Endothelial cell of umbilical vein (primary cell): ENCODE measurements at regions of chr2 and their contacts with region 1.

Region 1: DNA sequence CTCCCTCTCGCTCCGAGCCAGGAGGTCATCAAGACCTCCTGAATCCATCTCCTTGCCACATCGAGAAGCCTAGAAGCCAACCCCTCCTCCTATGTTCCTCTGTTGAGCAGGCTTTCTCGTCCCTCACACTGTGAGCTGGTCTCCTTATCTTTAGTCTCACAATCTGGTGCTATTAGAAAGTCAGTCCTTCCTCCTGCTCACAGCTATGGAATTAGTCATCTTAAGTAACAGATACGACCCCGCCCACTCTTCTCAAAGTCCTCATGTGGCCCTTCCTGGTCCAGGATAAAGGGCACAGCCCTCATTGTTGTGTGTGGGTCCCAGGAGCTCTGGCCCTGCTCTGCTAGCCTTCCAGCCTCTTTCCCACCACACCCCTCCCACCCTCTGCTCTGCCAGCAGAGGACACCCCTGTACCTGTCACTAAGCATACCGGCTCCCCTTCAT is 41.4 kb upstream of the TRIB2 start:
- DNase-seq: peak; percentile 69
- H3K4me3 ChIP-seq: no peak overlapping the region
- H3K27ac ChIP-seq: peak overlapping the region; percentile 81
- H3K4me1 ChIP-seq: peaks cover 33% of the 10 kb centered on the region
- H3K27me3 ChIP-seq: no peaks in the 10 kb centered on the region
- CTCF ChIP-seq: no peak
- POLR2A ChIP-seq: no peak

Region 2: DNA sequence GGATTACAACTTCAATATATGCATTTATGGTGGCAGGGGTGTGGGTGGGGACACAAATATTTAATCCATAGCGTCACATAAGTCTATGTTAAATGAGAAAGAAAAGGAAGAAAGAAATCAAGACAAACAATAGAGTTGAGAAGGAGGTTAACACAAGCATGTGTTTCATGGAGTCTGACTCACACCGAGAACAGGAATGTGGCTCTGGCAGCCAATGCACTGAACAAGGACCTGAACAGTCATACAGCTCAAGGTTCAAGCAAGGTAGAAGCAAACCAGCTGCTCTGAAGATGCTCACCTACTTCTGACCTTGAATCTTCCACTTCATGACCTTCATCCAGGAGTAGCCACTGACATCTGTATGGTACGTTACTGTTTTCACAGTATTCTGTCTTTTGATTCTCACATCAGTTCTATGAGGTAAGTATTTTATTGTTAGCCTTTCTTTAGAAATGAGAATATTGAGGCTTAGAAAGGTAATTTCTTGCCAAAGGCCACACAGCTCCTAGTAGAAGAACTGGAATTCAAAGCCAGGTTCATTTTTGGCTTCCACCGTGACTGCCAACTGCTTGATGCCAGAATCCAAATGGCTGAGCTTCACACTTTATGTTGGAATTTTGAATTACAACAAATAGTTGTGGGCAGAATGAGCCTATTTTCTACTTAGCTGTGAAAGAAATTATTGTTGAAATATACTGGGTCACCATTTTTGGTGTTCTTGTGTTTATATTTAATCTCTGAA is 965.0 kb before region 1 on chr2:
- CTCF ChIA-PET with region 1: no interaction called
- POLR2A ChIA-PET with region 1: no interaction called
- dilution Hi-C with region 1: no loop called
- intact Hi-C with region 1: no loop called
- DNase-seq: peak; percentile 78
- H3K4me3 ChIP-seq: no peak overlapping the region
- H3K27ac ChIP-seq: no peak overlapping the region
- H3K4me1 ChIP-seq: peaks cover 4% of the 10 kb centered on the region
- H3K27me3 ChIP-seq: no peaks in the 10 kb centered on the region
- CTCF ChIP-seq: no peak
- POLR2A ChIP-seq: no peak

Region 3: DNA sequence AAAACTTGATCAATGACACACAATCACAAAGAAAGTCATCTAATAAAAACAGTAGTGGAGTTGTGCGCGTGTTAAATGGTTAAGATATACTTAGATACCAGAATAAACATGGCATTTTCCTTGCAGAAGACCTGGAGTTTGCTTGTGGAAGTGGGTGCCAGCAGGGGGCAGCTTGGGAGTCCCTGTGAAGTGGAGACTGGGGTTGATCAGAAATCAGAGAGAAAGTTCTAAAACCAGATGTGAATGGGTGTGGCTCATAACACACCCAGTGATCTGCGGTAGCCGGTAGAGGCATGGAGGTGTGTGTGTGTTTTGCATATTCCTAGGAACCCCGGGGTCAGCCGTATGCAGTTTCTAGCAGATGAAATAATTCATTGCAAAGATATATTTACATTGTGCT is 258.8 kb before region 1 on chr2:
- CTCF ChIA-PET with region 1: no interaction called
- POLR2A ChIA-PET with region 1: no interaction called
- dilution Hi-C with region 1: no loop called
- intact Hi-C with region 1: no loop called
- DNase-seq: peak; percentile 57
- H3K4me3 ChIP-seq: no peak overlapping the region
- H3K27ac ChIP-seq: no peak overlapping the region
- H3K4me1 ChIP-seq: peaks cover 3% of the 10 kb centered on the region
- H3K27me3 ChIP-seq: no peaks in the 10 kb centered on the region
- CTCF ChIP-seq: peak; percentile 47 to 62
- POLR2A ChIP-seq: no peak

Region 4: DNA sequence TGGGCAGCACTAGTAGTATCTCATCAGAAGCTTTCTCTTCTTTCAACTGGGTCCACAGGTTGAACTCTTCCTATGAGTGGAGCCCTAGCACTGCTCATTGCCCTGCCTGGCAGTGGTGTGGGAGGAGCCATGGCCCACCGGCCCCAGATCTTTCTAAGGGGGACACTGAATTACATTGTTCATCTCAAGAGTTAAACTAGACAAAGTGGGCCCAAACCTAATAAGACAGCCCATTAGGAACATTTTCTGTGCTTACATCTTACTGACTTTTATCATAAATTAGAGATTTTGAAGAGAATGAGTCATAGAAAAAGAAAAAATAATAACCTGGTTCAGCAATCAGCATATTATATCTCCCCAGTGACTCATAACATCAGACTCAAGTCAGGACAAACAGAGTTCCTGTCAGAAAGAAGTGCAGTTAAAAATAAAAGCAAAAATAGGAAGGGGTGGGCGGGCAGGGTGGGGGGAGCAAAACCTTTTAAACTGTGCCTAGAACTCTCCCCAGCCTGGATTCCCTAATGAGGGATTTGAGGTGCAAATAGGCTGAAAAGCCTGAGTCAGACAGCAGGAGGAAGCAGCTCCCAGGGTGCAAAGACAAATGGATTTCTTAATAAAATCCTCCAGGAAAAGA is 120.2 kb before region 1 on chr2:
- CTCF ChIA-PET with region 1: no interaction called
- POLR2A ChIA-PET with region 1: no interaction called
- dilution Hi-C with region 1: no loop called
- intact Hi-C with region 1: loop called (anchors 5 kb)
- DNase-seq: peak; percentile 85
- H3K4me3 ChIP-seq: no peak overlapping the region
- H3K27ac ChIP-seq: no peak overlapping the region
- H3K4me1 ChIP-seq: peaks cover 23% of the 10 kb centered on the region
- H3K27me3 ChIP-seq: no peaks in the 10 kb centered on the region
- CTCF ChIP-seq: no peak
- POLR2A ChIP-seq: no peak

Region 5: GRCh38 chr2:12665334-12665733 is 10.0 kb before region 1 on chr2:
- CTCF ChIA-PET with region 1: interaction called, 9 read pairs
- POLR2A ChIA-PET with region 1: no interaction called
- dilution Hi-C with region 1: no loop called
- intact Hi-C with region 1: loop called (anchors 1 kb)
- DNase-seq: peak; percentile 94
- H3K4me3 ChIP-seq: no peak overlapping the region
- H3K27ac ChIP-seq: peak overlapping the region; percentile 86
- H3K4me1 ChIP-seq: peaks cover 24% of the 10 kb centered on the region
- H3K27me3 ChIP-seq: no peaks in the 10 kb centered on the region
- CTCF ChIP-seq: no peak
- POLR2A ChIP-seq: no peak

Region 6: GRCh38 chr2:12702305-12703121 is 27.1 kb after region 1 on chr2:
- CTCF ChIA-PET with region 1: interaction called, 3 read pairs
- POLR2A ChIA-PET with region 1: no interaction called
- dilution Hi-C with region 1: no loop called
- intact Hi-C with region 1: loop called (anchors 1 kb)
- DNase-seq: peak; percentile 93
- H3K4me3 ChIP-seq: no peak overlapping the region
- H3K27ac ChIP-seq: peak overlapping the region; percentile 32
- H3K4me1 ChIP-seq: peaks cover 12% of the 10 kb centered on the region
- H3K27me3 ChIP-seq: no peaks in the 10 kb centered on the region
- CTCF ChIP-seq: no peak
- POLR2A ChIP-seq: no peak

Region 7: DNA sequence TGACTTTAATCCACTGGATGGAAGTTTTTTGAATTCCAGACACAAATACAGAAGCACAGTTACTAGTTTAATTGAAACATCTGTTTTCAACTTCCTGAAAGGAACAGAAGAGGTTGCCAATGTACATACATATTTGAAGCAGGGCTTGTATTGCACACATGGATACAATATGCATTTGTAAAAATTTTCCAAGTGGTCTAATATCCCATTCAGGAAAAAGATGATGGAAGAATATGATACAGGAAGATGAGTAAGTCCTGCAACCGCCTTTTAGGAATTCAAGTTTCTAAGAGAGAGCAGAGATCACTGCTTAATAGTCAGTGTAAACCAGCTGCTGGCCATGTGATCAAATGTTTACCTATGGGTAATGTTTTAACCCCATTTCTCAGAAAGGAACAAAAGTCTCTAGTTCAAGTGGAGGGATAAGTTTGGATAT is 306.8 kb after region 1 on chr2:
- CTCF ChIA-PET with region 1: no interaction called
- POLR2A ChIA-PET with region 1: no interaction called
- dilution Hi-C with region 1: no loop called
- intact Hi-C with region 1: loop called (anchors 5 kb)
- DNase-seq: peak; percentile 90
- H3K4me3 ChIP-seq: no peak overlapping the region
- H3K27ac ChIP-seq: peak overlapping the region; percentile 50
- H3K4me1 ChIP-seq: peaks cover 28% of the 10 kb centered on the region
- H3K27me3 ChIP-seq: no peaks in the 10 kb centered on the region
- CTCF ChIP-seq: no peak
- POLR2A ChIP-seq: no peak